A673 (cell line): ENCODE measurements at regions of chr4 and their contacts with region 1.

Region 1: GRCh38 chr4:85084380-85085094 is 118.0 kb upstream of the WDFY3 start:
- DNase-seq: peak; percentile 54
- H3K4me3 ChIP-seq: no peak overlapping the region
- H3K27ac ChIP-seq: no peak overlapping the region
- H3K4me1 ChIP-seq: no peaks in the 10 kb centered on the region
- H3K27me3 ChIP-seq: no peaks in the 10 kb centered on the region
- CTCF ChIP-seq: peak; percentile 57

Region 2: DNA sequence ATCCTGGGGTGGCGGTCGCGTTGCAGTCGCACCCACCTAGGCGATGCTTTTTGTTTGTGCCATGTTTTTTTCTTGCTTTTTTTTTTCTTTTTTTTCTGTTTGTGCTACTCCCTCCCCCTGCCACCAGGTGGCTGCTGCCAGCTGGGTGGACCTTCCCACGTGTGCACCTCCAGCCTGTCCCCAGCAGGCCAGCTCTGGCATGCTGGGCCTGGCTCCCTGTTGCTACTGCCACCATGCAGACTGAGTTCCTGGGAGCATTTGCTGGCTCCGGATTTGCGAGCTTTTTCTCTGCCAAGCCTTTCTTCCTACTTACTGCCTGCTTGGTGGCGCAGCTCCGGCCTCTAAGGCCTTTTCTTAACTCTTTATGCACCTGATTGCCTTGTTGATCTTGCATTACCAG is 43.1 kb after region 1 on chr4:
- CTCF ChIA-PET with region 1: no interaction called
- POLR2A ChIA-PET with region 1: no interaction called
- intact Hi-C with region 1: no loop called
- DNase-seq: peak; percentile 47
- H3K4me3 ChIP-seq: no peak overlapping the region
- H3K27ac ChIP-seq: no peak overlapping the region
- H3K4me1 ChIP-seq: no peaks in the 10 kb centered on the region
- H3K27me3 ChIP-seq: no peaks in the 10 kb centered on the region
- CTCF ChIP-seq: peak; percentile 52

Region 3: GRCh38 chr4:85370430-85371032 is 286.0 kb after region 1 on chr4:
- CTCF ChIA-PET with region 1: no interaction called
- POLR2A ChIA-PET with region 1: no interaction called
- intact Hi-C with region 1: loop called (anchors 10 kb)
- DNase-seq: peak; percentile 49
- H3K4me3 ChIP-seq: no peak overlapping the region
- H3K27ac ChIP-seq: no peak overlapping the region
- H3K4me1 ChIP-seq: no peaks in the 10 kb centered on the region
- H3K27me3 ChIP-seq: no peaks in the 10 kb centered on the region
- CTCF ChIP-seq: peak; percentile 67